HCT116 (cell line): ENCODE measurements at regions of chr5 and their contacts with region 1.

Region 1: DNA sequence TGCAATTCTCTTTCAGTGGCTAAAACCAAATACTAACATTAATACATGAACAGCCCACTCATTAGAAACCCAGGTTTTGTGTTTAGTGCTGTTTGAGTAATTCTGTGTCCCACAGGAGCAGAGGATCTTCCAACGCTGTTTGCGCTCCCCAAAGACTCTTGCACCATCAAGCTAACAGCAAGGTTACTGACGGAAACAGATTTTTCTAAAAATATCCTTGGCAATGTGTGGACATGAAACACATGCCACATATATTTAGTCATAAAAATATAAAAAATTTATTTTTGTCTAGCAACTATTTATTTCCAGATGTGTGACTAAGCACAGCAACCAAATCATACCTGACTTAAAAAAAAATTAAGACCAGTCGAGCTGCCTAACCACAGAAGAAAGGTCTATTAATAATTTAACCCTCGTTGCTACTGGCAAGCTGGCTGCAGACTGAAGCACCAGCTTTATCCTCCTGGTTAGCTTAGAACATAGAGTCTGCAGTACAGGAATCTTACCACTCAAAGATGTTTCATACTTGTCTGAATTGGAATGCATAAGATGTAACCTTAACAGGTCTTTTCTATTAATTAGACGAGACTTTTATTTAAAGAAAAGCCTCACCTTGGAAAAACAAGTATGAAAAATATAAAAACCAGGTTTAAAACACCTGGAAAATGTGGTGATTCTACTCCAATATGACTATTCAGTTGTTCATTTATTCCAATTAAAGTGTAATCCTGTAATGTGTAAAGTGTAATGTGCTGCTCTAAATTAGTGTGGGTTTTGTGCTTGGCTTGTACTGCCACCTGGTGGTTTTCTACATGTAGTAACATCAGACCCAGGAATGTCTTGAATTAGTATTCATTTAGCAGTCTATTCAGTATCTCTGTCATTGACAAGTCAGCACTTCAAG is 272.5 kb downstream of the EPB41L4A start:
- DNase-seq: peak; percentile 73
- ATAC-seq: peak; percentile 95
- H3K4me3 ChIP-seq: no peak overlapping the region
- H3K27ac ChIP-seq: no peak overlapping the region
- H3K4me1 ChIP-seq: no peaks in the 10 kb centered on the region
- H3K27me3 ChIP-seq: peaks cover 5% of the 10 kb centered on the region; the same call in 1 of the 2 replicates
- CTCF ChIP-seq: peak; percentile 56 to 88 (median 87)
- POLR2A ChIP-seq: no peak
- RAD21 ChIP-seq: peak; percentile 94

Region 2: GRCh38 chr5:110757118-110757729 is 1389.4 kb before region 1 on chr5:
- CTCF ChIA-PET with region 1: no interaction called
- POLR2A ChIA-PET with region 1: no interaction called
- RAD21 ChIA-PET with region 1: no interaction called
- intact Hi-C with region 1: loop called (anchors 5 kb)
- DNase-seq: peak; percentile 40
- ATAC-seq: peak; percentile 55; the same call in 1 of the 2 replicates
- H3K4me3 ChIP-seq: no peak overlapping the region
- H3K27ac ChIP-seq: no peak overlapping the region
- H3K4me1 ChIP-seq: no peaks in the 10 kb centered on the region
- H3K27me3 ChIP-seq: no peaks in the 10 kb centered on the region
- CTCF ChIP-seq: peak; percentile 37 to 79 (median 58); a peak in 5 of 6 replicates
- POLR2A ChIP-seq: no peak
- RAD21 ChIP-seq: peak; percentile 72

Region 3: DNA sequence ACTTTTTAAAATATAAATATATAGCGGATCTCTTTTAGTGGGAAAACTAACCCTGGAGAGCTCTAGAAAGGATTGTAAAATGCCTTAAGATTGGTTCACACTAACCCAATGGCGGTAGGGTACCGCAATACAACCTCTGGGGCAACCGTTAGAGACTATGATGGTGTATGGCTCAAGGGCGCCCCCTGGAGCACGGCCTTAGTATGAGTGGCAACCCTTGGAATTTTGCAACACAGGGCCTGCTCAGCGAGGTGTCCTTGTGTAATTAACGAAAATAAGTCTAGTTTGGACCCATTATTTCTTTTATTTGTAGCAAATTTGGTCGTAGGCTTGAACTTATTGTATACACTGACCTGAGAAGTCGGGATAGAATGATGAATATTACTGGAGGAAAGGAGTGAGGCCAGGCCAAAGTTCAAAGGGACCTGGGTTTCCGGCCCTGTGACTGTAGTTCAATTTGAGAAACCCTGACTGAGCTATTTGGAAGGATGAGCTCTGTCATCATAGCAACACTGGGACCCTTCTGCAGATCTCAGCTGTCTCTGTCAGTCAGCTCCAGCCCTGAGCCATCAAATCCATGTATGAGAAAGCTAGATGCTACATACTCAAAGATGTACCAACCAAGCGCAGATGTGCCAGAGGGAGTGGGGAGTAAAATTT is 867.6 kb before region 1 on chr5:
- CTCF ChIA-PET with region 1: no interaction called
- POLR2A ChIA-PET with region 1: no interaction called
- RAD21 ChIA-PET with region 1: no interaction called
- intact Hi-C with region 1: loop called (anchors 2 kb)
- DNase-seq: peak; percentile 42
- ATAC-seq: peak; percentile 100
- H3K4me3 ChIP-seq: no peak overlapping the region
- H3K27ac ChIP-seq: no peak overlapping the region
- H3K4me1 ChIP-seq: no peaks in the 10 kb centered on the region
- H3K27me3 ChIP-seq: no peaks in the 10 kb centered on the region
- CTCF ChIP-seq: peak; percentile 76 to 95 (median 89)
- POLR2A ChIP-seq: no peak
- RAD21 ChIP-seq: peak; percentile 85

Region 4: DNA sequence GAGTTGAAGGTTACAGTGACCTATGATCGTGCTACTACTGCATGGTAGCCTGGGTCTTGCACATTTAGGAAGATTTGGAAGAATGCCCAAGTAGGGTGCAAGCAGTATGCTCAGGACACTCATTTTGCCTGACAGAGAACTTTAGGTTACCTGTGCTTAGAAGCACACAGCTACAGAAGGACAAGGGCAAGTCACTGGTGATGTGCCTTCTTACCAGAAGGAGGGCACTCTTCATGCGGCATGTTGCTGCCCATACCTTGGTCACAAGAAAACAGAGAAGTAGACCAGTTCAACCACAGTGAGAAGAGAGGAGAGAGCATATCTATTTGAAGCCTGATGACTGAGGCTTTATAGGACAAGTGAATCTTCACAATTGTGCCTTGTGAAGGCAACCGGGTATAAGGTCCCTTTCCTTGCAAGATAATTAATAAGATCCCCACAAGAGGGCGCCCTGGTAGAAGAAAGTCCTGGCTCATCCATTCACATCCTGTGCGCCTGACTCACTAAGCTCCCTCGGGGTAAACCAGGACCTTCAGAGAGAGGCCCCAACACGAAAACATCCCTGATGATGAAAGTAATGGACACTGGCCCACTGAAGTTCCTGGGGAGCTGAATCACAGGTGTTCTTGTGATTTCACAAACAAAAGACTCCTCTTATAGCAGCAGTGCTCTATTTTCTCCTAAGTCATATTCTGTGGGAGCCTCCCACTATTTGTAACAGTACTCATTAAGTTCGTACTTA is 596.1 kb before region 1 on chr5:
- CTCF ChIA-PET with region 1: interaction called, 8 read pairs
- POLR2A ChIA-PET with region 1: no interaction called
- RAD21 ChIA-PET with region 1: interaction called in 1 of 2 experiments, 4 read pairs
- intact Hi-C with region 1: loop called (anchors 1 kb)
- DNase-seq: peak; percentile 71
- ATAC-seq: peak; percentile 99
- H3K4me3 ChIP-seq: no peak overlapping the region
- H3K27ac ChIP-seq: no peak overlapping the region
- H3K4me1 ChIP-seq: no peaks in the 10 kb centered on the region
- H3K27me3 ChIP-seq: peaks cover 5% of the 10 kb centered on the region; the same call in 1 of the 2 replicates
- CTCF ChIP-seq: peak; percentile 45 to 68 (median 60); a peak in 4 of 6 replicates
- POLR2A ChIP-seq: no peak
- RAD21 ChIP-seq: peak; percentile 81

Region 5: GRCh38 chr5:111757355-111758283 is 389.0 kb before region 1 on chr5:
- CTCF ChIA-PET with region 1: no interaction called
- POLR2A ChIA-PET with region 1: no interaction called
- RAD21 ChIA-PET with region 1: no interaction called
- intact Hi-C with region 1: loop called (anchors 5 kb)
- DNase-seq: peak; percentile 71
- ATAC-seq: peak; percentile 88
- H3K4me3 ChIP-seq: peak overlapping the region; percentile 44 to 61
- H3K27ac ChIP-seq: peak overlapping the region; percentile 64
- H3K4me1 ChIP-seq: peaks cover 3 to 15% of the 10 kb centered on the region in 2 experiments
- H3K27me3 ChIP-seq: no peaks in the 10 kb centered on the region
- CTCF ChIP-seq: peak in 2 of 3 experiments; percentile 38 to 44; a peak in 3 of 6 replicates
- POLR2A ChIP-seq: peak; percentile 14
- RAD21 ChIP-seq: 0 out of 2 replicates have a peak, but pooled peaks have one; percentile 3